Panc1 (cell line): ENCODE measurements at regions of chr5 and their contacts with region 1.

Region 1: DNA sequence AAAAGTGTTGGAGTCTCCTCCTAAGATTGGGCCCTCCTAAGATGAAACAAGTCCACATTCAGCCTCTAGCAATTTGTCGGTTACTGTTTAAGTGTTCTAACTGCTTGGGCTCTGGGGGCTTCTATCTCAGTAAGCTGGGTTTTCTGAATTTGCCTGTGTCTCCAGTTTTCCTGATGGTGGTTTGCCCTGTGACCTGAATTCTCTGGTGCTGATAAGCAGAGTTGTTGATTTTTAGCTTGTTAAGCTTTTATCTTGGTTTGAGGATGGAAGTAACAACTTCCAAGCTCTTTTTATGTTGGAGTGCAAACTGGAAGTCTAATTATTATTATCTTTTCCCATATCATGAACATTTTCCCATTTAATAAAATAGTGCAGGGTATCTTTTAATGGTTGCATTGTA is 30.9 kb downstream of the HSD17B4 start:
- DNase-seq: no peak
- ATAC-seq: no peak
- H3K4me3 ChIP-seq: no peak overlapping the region
- H3K27ac ChIP-seq: no peak overlapping the region
- H3K4me1 ChIP-seq: no peaks in the 10 kb centered on the region
- H3K27me3 ChIP-seq: no peaks in the 10 kb centered on the region
- CTCF ChIP-seq: no peak

Region 2: GRCh38 chr5:119452373-119453039 is 30.6 kb before region 1 on chr5 and contains the start of gene HSD17B4:
- CTCF ChIA-PET with region 1: no interaction called
- POLR2A ChIA-PET with region 1: no interaction called
- in situ Hi-C with region 1: no loop called
- intact Hi-C with region 1: no loop called
- DNase-seq: peak; percentile 48
- ATAC-seq: peak; percentile 100
- H3K4me3 ChIP-seq: peak within 1 kb of the TSS; percentile 62 to 89
- H3K27ac ChIP-seq: peak within 1 kb of the TSS; percentile 79
- H3K4me1 ChIP-seq: peaks cover 6% of the 10 kb centered on the region
- H3K27me3 ChIP-seq: no peaks in the 10 kb centered on the region
- CTCF ChIP-seq: no peak
- total RNA-seq, gene HSD17B4: 107 TPM

Region 3: GRCh38 chr5:119501671-119502182 is 18.6 kb after region 1 on chr5:
- CTCF ChIA-PET with region 1: interaction called, 10 read pairs
- POLR2A ChIA-PET with region 1: no interaction called
- in situ Hi-C with region 1: no loop called
- intact Hi-C with region 1: no loop called
- DNase-seq: no peak
- ATAC-seq: no peak
- H3K4me3 ChIP-seq: no peak overlapping the region
- H3K27ac ChIP-seq: no peak overlapping the region
- H3K4me1 ChIP-seq: no peaks in the 10 kb centered on the region
- H3K27me3 ChIP-seq: no peaks in the 10 kb centered on the region
- CTCF ChIP-seq: no peak

Region 4: GRCh38 chr5:119752921-119753886 is 270.0 kb after region 1 on chr5:
- CTCF ChIA-PET with region 1: no interaction called
- POLR2A ChIA-PET with region 1: no interaction called
- in situ Hi-C with region 1: no loop called
- intact Hi-C with region 1: no loop called
- DNase-seq: no peak
- ATAC-seq: no peak
- H3K4me3 ChIP-seq: no peak overlapping the region
- H3K27ac ChIP-seq: no peak overlapping the region
- H3K4me1 ChIP-seq: no peaks in the 10 kb centered on the region
- H3K27me3 ChIP-seq: no peaks in the 10 kb centered on the region
- CTCF ChIP-seq: no peak